Esophagus muscularis mucosa (tissue), 4 donors: ENCODE measurements at regions of chr2 and their contacts with region 1.

Region 1: DNA sequence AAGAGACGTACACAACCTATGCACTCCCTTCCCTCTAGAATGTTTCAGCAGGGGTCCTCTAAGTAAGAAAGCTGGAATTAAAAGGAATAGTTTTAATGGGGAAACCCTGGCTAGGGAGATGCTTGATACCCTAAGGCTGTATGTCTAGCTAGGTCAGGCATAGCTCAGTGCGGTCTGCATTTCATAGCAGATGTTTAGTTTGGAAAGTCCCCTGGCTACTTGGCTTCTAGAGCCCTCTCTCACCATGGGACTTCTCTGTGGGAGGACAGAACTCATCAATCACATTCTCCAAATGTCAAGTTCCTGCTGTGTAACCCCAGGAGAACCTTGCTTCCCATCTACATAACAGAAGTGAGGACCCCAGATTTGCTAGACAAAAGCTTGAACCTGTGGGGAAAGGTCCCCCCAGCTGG is 24.1 kb upstream of the ANXA4 start:
- DNase-seq: no peak
- H3K4me3 ChIP-seq: no peak overlapping the region
- H3K27ac ChIP-seq: no peak overlapping the region
- H3K4me1 ChIP-seq: peaks cover 0 to 8% (median 4%) of the 10 kb centered on the region in 4 donors
- H3K27me3 ChIP-seq: no peaks in the 10 kb centered on the region
- CTCF ChIP-seq: no peak
- EP300 ChIP-seq: no peak
- POLR2A ChIP-seq: no peak

Region 2: GRCh38 chr2:69345434-69345833 is 372.4 kb before region 1 on chr2:
- intact Hi-C with region 1: no loop called
- DNase-seq: no peak
- H3K4me3 ChIP-seq: no peak overlapping the region
- H3K27ac ChIP-seq: no peak overlapping the region
- H3K4me1 ChIP-seq: peaks cover 0 to 7% (median 2%) of the 10 kb centered on the region in 4 donors
- H3K27me3 ChIP-seq: no peaks in the 10 kb centered on the region
- CTCF ChIP-seq: no peak
- EP300 ChIP-seq: no peak
- POLR2A ChIP-seq: no peak

Region 3: DNA sequence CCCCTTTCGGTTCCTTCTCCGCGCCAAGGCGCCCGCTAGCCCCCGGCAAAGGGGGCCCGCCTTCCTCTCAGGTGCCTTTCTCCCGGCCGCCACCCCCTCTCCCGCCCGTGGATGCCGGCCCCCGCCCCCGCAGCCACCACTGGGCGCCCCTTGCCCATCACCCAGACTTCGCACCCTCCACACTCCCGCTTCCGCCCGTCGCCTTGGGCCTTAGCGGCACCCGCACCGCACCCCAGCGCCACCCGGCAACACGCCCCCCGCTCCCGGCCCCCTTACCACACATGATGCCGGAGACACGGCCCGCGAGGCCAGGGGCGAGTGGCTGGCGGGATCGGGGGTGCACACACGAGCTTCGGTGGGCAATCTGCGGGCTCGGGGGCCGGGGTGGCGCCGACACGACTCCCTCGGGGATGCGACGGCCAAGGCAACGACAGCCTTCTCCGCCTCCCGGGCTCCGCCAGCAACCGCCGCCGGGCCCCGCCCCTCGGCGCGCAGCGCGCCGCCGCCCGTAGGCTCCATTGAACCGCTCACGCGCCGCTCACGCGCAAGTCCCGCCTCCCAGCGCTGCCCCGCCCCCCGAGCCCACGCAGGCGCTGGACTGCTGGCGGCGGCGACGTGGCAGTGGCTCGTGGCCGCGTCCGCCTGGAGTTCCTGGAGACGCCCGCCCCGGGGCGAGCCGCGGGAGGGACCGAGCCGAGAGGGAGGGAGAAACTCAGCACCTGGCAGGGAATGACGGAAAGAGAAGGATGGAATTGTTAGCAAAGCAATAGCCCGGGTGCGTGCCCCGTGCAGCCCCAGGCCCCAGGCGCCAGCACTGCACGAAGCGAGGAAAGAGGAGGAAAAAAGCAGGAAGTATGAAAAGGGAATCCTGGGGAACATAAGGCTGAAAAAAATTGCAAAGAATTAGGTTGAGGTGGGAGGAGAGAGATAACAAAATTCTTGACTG is 330.8 kb before region 1 on chr2 and contains the start of gene GFPT1:
- intact Hi-C with region 1: loop called (anchors 10 kb)
- DNase-seq: peak; percentile 97
- H3K4me3 ChIP-seq: peak within 1 kb of the TSS; percentile 83 to 97 (median 92)
- H3K27ac ChIP-seq: peak within 1 kb of the TSS; percentile 85 to 91 (median 86)
- H3K4me1 ChIP-seq: peaks cover 15 to 45% (median 42%) of the 10 kb centered on the region in 4 donors
- H3K27me3 ChIP-seq: no peaks in the 10 kb centered on the region
- CTCF ChIP-seq: peak in 1 of 3 experiments; percentile 5
- EP300 ChIP-seq: no peak
- POLR2A ChIP-seq: peak; percentile 32
- total RNA-seq, gene GFPT1: 17.4 to 25.3 (median 23.2) TPM

Region 4: GRCh38 chr2:69559442-69560146 is 158.3 kb before region 1 on chr2:
- intact Hi-C with region 1: loop called (anchors 5 kb)
- DNase-seq: no peak
- H3K4me3 ChIP-seq: no peak overlapping the region
- H3K27ac ChIP-seq: no peak overlapping the region
- H3K4me1 ChIP-seq: peaks cover 17 to 35% (median 20%) of the 10 kb centered on the region in 4 donors
- H3K27me3 ChIP-seq: no peaks in the 10 kb centered on the region
- CTCF ChIP-seq: peak; percentile 47 to 59 (median 58)
- EP300 ChIP-seq: no peak
- POLR2A ChIP-seq: no peak

Region 5: GRCh38 chr2:69616756-69617155 is 101.1 kb before region 1 on chr2:
- intact Hi-C with region 1: no loop called
- DNase-seq: peak; percentile 77
- H3K4me3 ChIP-seq: no peak overlapping the region
- H3K27ac ChIP-seq: no peak overlapping the region
- H3K4me1 ChIP-seq: peaks cover 34 to 46% (median 41%) of the 10 kb centered on the region in 4 donors
- H3K27me3 ChIP-seq: no peaks in the 10 kb centered on the region
- CTCF ChIP-seq: no peak
- EP300 ChIP-seq: no peak
- POLR2A ChIP-seq: no peak